PC-3 (cell line): ENCODE measurements at regions of chr12 and their contacts with region 1.

Region 1: GRCh38 chr12:90959538-90960139 is 4.7 kb upstream of the CCER1 start:
- DNase-seq: peak; percentile 77
- ATAC-seq: peak; percentile 81
- H3K4me3 ChIP-seq: no peak overlapping the region
- H3K27ac ChIP-seq: no peak overlapping the region
- H3K4me1 ChIP-seq: 0 out of 2 replicates have a peak, but pooled peaks cover 3% of the 10 kb centered on the region
- H3K27me3 ChIP-seq: no peaks in the 10 kb centered on the region
- CTCF ChIP-seq: peak; percentile 70

Region 2: DNA sequence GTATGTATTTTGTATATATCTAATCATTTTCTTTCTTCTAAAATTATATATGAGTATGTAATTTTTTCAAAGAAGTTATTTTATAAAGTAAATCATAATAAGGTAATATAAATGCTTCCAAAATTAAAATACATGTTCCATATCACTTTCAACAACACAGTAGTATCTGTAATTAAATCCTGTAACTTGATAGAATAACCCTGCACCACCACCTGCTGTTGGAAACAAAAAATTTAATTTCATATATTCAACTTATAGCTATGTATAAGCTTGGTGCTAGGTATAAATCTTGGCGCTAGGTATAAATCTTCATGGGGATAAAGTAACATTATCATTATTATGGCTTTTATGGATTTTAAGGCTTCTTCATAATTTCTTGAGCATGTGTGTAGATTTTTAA is 372.7 kb after region 1 on chr12:
- CTCF ChIA-PET with region 1: interaction called, 4 read pairs
- POLR2A ChIA-PET with region 1: no interaction called
- intact Hi-C with region 1: loop called (anchors 1 kb)
- DNase-seq: peak; percentile 30
- ATAC-seq: no peak
- H3K4me3 ChIP-seq: no peak overlapping the region
- H3K27ac ChIP-seq: no peak overlapping the region
- H3K4me1 ChIP-seq: peaks cover 5% of the 10 kb centered on the region; the same call in 1 of the 2 replicates
- H3K27me3 ChIP-seq: no peaks in the 10 kb centered on the region
- CTCF ChIP-seq: no peak; the same call in 1 of the 2 replicates

Region 3: DNA sequence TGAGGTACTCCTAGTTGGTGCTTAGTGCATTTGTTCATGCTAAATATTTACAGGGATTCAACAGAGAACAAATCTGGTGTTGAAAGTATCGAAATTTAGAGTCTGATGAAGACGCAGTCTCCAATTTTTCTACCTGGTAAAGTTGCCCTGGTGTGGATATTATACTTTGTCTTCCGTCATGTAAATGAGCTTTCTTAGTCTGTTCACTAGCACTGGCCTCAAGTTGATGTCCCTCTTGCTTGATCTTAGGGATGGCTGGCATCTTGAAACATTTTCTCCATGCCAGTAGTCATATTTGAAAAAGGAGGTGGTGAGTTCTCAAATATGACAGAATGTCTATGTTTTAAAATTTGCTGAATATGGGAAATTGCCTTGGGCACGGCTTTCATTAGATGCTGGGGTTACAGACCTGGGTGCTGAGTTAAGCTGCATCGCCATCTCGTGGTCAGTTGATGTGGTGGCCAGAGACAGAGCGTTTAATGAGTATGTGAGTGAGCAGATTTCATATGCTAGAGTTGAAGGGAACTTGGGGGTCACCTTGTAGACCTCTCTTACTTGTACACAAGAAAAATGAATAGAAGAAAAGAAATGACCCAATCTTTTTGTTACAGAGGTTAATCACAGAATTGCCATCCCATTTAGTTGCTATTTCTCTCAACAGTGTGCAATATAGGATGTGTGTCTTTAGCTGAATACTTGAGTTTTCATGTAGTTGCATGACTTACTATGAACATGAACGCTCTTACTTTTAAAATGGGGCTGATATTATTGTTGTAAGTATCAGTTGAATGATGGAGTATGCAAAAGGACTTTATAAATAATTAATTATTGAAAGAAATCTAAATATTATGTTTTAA is 395.7 kb after region 1 on chr12:
- CTCF ChIA-PET with region 1: no interaction called
- POLR2A ChIA-PET with region 1: no interaction called
- intact Hi-C with region 1: loop called (anchors 1 kb)
- DNase-seq: peak; percentile 82
- ATAC-seq: peak; percentile 92
- H3K4me3 ChIP-seq: no peak overlapping the region
- H3K27ac ChIP-seq: no peak overlapping the region
- H3K4me1 ChIP-seq: no peaks in the 10 kb centered on the region
- H3K27me3 ChIP-seq: no peaks in the 10 kb centered on the region
- CTCF ChIP-seq: peak; percentile 95